Activated CD8-positive, alpha-beta memory T cell treated with anti-CD3 and anti-CD28 coated beads, Interleukin-2, amount 10 ng/mL, durations not matched to agents 7 days and 5 days (primary cell): ENCODE measurements at regions of chr4 and their contacts with region 1.

Region 1: DNA sequence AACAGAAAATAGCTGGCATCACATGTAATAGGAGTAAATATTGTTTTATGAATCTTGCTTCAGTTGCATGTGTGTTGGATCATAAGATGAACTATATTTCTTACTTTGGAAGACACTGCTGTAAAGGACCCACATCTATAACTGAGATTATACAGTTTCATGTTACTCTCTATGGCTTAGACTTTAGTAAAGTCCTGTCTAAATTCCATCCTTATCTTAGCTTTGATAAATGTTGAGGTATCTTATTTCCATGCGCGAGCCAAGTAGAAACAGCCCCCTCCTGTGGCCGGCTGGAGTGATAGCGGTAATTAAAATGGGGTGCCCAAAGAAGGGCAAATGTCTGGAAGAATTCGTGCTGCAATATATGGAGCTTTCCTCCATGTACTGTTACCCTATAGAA is 43.0 kb downstream of the CCDC158 start:
- DNase-seq: peak; percentile 64
- ATAC-seq: no peak
- H3K4me3 Mint-ChIP-seq: no peak overlapping the region
- H3K27ac Mint-ChIP-seq: no peak overlapping the region
- H3K4me1 Mint-ChIP-seq: no peaks in the 10 kb centered on the region
- H3K27me3 Mint-ChIP-seq: peaks cover 15% of the 10 kb centered on the region

Region 2: GRCh38 chr4:76279472-76279871 is 98.4 kb before region 1 on chr4:
- CTCF ChIA-PET with region 1: interaction called, 44 read pairs
- DNase-seq: no peak
- ATAC-seq: no peak
- H3K4me3 Mint-ChIP-seq: no peak overlapping the region
- H3K27ac Mint-ChIP-seq: no peak overlapping the region
- H3K4me1 Mint-ChIP-seq: peaks cover 9% of the 10 kb centered on the region
- H3K27me3 Mint-ChIP-seq: peaks cover 49% of the 10 kb centered on the region

Region 3: DNA sequence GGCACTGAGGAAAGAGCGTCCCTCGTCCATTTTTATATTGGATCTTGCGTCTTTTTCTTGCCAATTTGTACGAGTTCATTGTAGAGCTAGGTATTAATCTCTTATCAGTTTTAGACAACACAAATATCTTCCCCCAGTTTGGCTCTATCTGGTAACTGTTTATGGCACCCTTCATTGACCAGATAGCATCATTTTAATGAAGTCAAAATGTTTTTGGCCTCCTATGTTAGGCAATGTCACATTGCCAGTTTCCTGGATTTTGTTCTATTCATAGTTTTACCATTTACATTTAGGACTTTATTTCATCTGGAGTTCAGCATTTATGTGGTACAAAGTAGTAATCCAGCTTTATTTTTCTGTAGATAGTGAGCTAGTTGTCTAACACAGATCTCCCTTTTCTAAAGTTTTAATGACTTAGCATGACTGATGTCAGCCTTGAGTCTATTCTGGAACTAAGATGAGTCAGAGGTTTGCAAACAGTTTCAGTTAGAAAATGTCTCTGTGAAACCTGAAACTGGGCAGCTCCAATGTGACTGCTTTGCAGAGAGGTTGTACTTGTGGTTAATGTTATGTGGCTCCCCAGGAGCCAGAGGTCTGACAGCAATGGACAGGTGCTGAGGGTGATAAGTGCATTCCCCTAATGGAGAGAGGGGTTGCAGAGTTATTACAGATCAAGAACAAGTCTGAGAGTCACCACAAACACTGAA is 76.7 kb before region 1 on chr4:
- CTCF ChIA-PET with region 1: interaction called, 13 read pairs
- DNase-seq: peak; percentile 79
- ATAC-seq: peak; percentile 80
- H3K4me3 Mint-ChIP-seq: no peak overlapping the region
- H3K27ac Mint-ChIP-seq: peak overlapping the region; percentile 88
- H3K4me1 Mint-ChIP-seq: peaks cover 55% of the 10 kb centered on the region
- H3K27me3 Mint-ChIP-seq: peaks cover 18% of the 10 kb centered on the region

Region 4: DNA sequence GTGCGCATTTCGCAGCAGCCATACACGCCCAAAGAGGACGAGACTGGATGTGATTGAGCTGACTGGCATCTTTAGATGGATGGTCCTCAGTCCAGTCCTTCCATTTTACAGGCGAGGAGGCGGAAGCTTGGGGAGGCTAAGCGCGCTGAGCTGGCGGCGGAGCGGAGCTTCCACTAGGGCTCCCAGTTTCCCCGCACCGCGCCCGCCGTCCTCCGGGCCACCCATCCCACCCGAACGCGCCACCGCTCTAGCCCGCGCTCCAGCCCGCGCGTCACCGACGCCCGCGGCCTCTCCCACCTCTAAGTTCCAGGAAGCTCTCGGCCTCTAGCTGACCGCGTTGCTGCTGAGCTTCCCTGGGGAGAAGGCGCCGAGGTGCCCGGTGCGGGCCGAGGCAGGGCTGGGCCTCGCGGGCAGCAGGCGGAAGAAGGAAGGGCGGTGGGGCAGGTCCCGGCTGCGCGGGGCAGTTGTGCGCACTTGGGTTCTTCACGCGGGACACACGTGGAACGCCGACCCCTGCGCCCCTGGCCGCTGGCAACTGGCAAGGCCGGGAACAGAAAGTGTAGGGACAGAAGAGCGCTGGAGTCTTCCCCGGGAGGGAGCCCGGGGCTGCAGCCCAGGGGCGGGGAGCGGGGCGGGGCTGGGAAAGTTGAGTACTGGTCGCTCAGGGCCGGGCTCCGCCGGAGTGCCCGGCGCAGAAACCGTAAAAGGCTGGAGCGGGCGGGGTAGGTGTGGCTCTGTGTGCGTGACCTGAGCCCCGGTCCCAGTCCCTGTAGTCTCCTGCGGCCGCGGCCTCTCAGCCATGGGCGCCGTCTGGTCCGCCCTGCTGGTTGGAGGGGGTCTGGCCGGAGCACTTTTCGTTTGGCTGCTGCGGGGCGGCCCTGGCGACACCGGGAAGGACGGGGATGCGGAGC is 71.7 kb before region 1 on chr4 and contains the start of gene STBD1:
- CTCF ChIA-PET with region 1: interaction called, 13 read pairs
- DNase-seq: peak; percentile 48
- ATAC-seq: peak; percentile 47
- H3K4me3 Mint-ChIP-seq: peak within 1 kb of the TSS; percentile 61
- H3K27ac Mint-ChIP-seq: peak within 1 kb of the TSS; percentile 57
- H3K4me1 Mint-ChIP-seq: peaks cover 42% of the 10 kb centered on the region
- H3K27me3 Mint-ChIP-seq: peaks cover 53% of the 10 kb centered on the region
- total RNA-seq, gene STBD1: 0.52 to 1.2 TPM